H1 (cell line): ENCODE measurements at regions of chr1 and their contacts with region 1.

Region 1: GRCh38 chr1:22731924-22732720 is 21.5 kb downstream of the EPHB2 start:
- DNase-seq: no peak
- H3K4me3 ChIP-seq: no peak overlapping the region
- H3K27ac ChIP-seq: no peak overlapping the region
- H3K4me1 ChIP-seq: peaks cover 0 to 12% (median 5%) of the 10 kb centered on the region in 4 experiments; a peak in 5 of 7 replicates
- H3K27me3 ChIP-seq: no peaks in the 10 kb centered on the region
- CTCF ChIP-seq: peak; percentile 66 to 82 (median 68)
- EP300 ChIP-seq: no peak
- POLR2A ChIP-seq: no peak
- RAD21 ChIP-seq: peak; percentile 62 to 78

Region 2: GRCh38 chr1:22717037-22717760 is 14.9 kb before region 1 on chr1:
- CTCF ChIA-PET with region 1: interaction called, 14 read pairs
- POLR2A ChIA-PET with region 1: no interaction called
- DNase-seq: no peak
- H3K4me3 ChIP-seq: no peak overlapping the region
- H3K27ac ChIP-seq: no peak overlapping the region
- H3K4me1 ChIP-seq: peaks cover 0 to 11% (median 6%) of the 10 kb centered on the region in 4 experiments; a peak in 6 of 7 replicates
- H3K27me3 ChIP-seq: peaks cover 0 to 8% (median 2%) of the 10 kb centered on the region in 4 experiments; a peak in 5 of 7 replicates
- CTCF ChIP-seq: no peak
- EP300 ChIP-seq: no peak
- POLR2A ChIP-seq: no peak
- RAD21 ChIP-seq: no peak

Region 3: GRCh38 chr1:22749919-22750688 is 18.0 kb after region 1 on chr1:
- CTCF ChIA-PET with region 1: interaction called, 10 read pairs
- POLR2A ChIA-PET with region 1: interaction called, 3 read pairs
- DNase-seq: no peak
- H3K4me3 ChIP-seq: no peak overlapping the region
- H3K27ac ChIP-seq: no peak overlapping the region
- H3K4me1 ChIP-seq: peaks cover 0 to 5% (median 1%) of the 10 kb centered on the region in 4 experiments; a peak in 2 of 7 replicates
- H3K27me3 ChIP-seq: no peaks in the 10 kb centered on the region
- CTCF ChIP-seq: no peak
- EP300 ChIP-seq: no peak
- POLR2A ChIP-seq: no peak
- RAD21 ChIP-seq: no peak